ENCODE measurements at regions of chr9 and their contacts with region 1.

Region 1: DNA sequence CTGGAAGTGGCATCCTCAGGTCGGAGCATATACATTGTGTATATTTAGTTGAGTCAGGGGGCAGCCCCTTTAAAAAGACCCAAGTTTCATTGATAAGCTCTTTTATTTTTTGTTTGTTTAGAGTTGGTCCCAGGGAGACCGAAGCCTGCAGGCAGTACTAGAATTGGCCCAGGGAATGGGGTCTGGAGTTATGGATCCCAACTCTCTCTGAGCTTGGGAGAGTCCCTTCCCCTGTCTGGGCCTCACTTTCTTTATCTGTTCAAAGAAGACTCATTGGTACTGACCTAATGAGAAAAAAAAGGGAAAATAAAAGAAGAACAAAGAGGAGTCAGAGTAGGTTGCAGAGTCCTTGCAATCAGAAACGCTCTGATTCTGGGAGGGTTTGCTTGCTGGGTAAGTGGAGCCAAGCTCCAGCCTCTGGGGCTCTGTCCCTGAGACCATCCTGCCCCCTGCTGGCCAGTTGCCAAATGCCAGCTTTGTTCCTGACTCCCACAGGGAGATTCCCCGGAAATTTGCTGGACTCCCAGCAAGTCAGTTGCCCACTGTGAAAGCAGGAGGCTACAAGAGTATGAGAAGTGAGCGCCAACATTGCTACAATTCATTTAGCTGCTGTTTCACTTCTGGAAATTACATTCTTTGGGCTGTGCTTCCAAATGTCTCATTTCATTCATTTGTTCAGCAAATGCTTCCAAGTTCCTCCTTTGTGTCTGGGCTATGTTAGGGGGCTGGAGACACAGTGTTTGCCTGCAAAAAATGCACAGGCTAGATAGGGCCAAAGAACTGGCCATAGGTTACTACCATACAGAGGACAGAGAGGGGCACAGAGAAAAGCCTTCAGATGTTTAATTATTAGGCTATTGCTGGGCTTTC is 156.2 kb downstream of the MELK start:
- DNase-seq: peak in 9 of 10 donors; percentile 12 to 74 (median 58)
- H3K4me3 ChIP-seq: no peak overlapping the region
- H3K27ac ChIP-seq: no peak overlapping the region
- H3K27me3 ChIP-seq: peaks cover 0 to 4% (median 0%) of the 10 kb centered on the region in 45 donors
- CTCF ChIP-seq: peak in 55 of 56 donors; percentile 21 to 65 (median 42)

Region 2: DNA sequence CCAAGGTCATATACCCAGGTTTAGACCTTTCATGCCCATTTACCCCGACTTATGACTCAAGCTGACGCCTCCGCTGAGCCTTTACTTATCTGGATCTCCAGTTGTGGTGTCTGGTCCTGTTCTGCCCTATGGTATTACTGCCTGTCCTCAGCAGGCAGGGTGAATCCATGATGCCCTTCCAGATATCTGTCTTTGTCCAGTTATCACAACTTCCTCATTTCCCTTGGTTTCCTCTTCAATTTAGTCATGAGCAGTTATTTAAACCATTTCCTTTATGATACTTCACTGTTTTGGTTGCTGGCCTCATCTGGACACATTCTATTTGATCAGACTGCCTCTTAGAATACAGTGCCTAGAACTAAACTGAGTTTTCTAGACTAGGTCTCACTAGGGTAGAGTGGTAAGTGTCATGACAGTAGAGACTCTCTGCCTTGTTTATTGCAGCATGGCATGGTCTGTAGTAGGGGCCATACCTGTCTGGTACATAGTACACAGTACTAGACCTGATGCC is 62.9 kb before region 1 on chr9:
- intact Hi-C with region 1: no loop called
- DNase-seq: no peak
- H3K4me3 ChIP-seq: no peak overlapping the region
- H3K27ac ChIP-seq: no peak overlapping the region
- H3K27me3 ChIP-seq: no peaks in the 10 kb centered on the region
- CTCF ChIP-seq: no peak

Region 3: DNA sequence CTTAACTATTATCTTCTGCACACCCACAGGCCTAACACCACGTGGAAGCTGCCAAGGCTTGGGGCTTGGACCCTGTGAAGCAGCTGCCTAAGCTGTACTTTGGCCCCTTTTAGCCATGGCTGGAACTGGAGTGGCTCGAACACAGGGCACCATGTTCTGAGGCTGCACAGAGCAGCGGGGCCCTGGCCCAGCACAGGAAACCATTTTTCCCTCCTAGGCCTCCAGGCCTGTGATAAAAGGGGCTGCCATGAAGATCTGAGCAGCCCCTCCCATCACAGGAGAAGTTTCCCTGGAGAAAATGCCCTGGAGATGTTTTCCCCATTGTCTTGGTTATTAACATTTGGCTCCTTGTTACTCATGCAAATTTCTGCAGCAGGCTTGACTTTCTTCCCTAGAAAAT is 29.9 kb before region 1 on chr9:
- intact Hi-C with region 1: no loop called
- DNase-seq: no peak
- H3K4me3 ChIP-seq: no peak overlapping the region
- H3K27ac ChIP-seq: no peak overlapping the region
- H3K27me3 ChIP-seq: peaks cover 0 to 12% (median 0%) of the 10 kb centered on the region in 45 donors
- CTCF ChIP-seq: no peak

Region 4: GRCh38 chr9:36788534-36788933 is 59.6 kb after region 1 on chr9:
- intact Hi-C with region 1: loop called in 1 of 2 experiments (anchors 10 kb)
- DNase-seq: no peak
- H3K4me3 ChIP-seq: no peak overlapping the region
- H3K27ac ChIP-seq: no peak overlapping the region
- H3K27me3 ChIP-seq: peaks cover 0 to 7% (median 0%) of the 10 kb centered on the region in 45 donors
- CTCF ChIP-seq: peak in 17 of 56 donors; percentile 11 to 45 (median 20)

Measured in dorsolateral prefrontal cortex (tissue), 120 donors.